Vagina (tissue), 2 donors: ENCODE measurements at regions of chr12 and their contacts with region 1.

Region 1: DNA sequence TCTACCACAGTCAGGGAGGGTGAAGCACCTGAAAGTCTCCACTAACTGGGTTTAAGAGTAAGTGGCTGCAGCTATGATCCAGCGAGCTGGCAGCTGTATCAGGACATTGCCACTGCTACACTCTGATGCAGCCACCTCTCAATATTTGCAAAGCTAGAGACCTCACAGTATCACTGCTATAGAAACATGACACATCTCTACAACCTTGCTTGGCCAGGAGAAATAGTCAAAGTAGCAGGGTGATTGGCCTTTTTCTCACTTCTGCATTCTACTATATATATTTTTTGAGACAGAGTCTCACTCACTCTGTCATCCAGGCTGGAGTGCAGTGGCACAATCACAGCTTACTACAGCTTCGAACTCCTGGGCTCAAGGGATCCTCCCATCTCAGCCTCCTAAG is 9.3 kb upstream of the FMNL3 start:
- DNase-seq: no peak
- H3K4me3 ChIP-seq: no peak overlapping the region
- H3K27ac ChIP-seq: no peak overlapping the region
- H3K4me1 ChIP-seq: no peaks in the 10 kb centered on the region
- H3K27me3 ChIP-seq: no peaks in the 10 kb centered on the region
- CTCF ChIP-seq: no peak
- POLR2A ChIP-seq: no peak

Region 2: GRCh38 chr12:49615725-49616124 is 100.8 kb before region 1 on chr12:
- intact Hi-C with region 1: no loop called
- DNase-seq: no peak
- H3K4me3 ChIP-seq: no peak overlapping the region
- H3K27ac ChIP-seq: no peak overlapping the region
- H3K4me1 ChIP-seq: no peaks in the 10 kb centered on the region
- H3K27me3 ChIP-seq: no peaks in the 10 kb centered on the region
- CTCF ChIP-seq: no peak
- POLR2A ChIP-seq: no peak

Region 3: GRCh38 chr12:49693994-49694393 is 22.6 kb before region 1 on chr12:
- intact Hi-C with region 1: loop called (anchors 1 kb)
- DNase-seq: no peak
- H3K4me3 ChIP-seq: no peak overlapping the region
- H3K27ac ChIP-seq: no peak overlapping the region
- H3K4me1 ChIP-seq: peaks cover 7% of the 10 kb centered on the region
- H3K27me3 ChIP-seq: no peaks in the 10 kb centered on the region
- CTCF ChIP-seq: no peak
- POLR2A ChIP-seq: no peak